ENCODE measurements at regions of chr17 and their contacts with region 1.

Region 1: DNA sequence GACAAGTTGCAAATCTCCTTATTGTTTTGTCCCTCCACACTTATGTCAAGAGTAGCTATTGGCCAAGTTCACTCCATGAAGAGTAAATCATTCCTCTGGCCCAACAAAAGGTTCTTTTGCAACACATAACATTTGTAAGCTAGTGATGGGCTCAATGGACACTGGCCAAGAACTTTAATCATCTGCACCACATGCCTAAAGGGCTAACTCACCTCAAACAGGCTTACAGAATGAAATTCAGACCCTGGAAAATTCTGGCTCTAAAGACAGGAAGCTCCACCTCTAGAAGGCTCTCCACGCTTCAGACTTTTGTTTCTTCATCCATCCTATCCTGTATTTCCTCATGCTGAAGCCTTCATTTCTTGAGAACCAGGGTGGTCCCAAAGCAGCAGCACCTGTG is 10.9 kb upstream of the ANKFN1 start:
- DNase-seq: no peak
- ATAC-seq: no peak
- H3K4me3 ChIP-seq: no peak overlapping the region
- H3K4me3 Mint-ChIP-seq: no peak overlapping the region
- H3K27ac ChIP-seq: no peak overlapping the region
- H3K27ac Mint-ChIP-seq: no peak overlapping the region
- H3K4me1 ChIP-seq: no peaks in the 10 kb centered on the region
- H3K4me1 Mint-ChIP-seq: no peaks in the 10 kb centered on the region
- H3K27me3 ChIP-seq: no peaks in the 10 kb centered on the region
- H3K27me3 Mint-ChIP-seq: no peaks in the 10 kb centered on the region
- CTCF ChIP-seq: no peak

Region 2: DNA sequence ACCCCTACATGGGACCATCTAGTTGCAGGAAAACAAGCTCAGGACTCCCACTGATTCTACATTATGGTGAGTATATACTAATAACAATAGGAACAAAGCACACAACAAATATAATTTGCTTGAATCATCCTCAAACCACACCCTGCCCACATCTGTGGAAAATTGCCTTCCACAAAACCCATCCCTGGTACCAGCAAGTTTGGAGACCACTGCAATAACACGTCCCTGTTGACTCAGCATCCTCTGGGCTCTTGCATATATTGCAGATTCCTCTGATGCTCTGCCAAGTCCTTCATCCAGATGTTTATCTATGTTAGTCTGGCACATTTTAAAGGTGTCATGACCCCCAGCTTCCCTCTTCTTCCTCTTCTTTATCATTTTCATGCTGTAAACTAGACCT is 253.1 kb before region 1 on chr17:
- CTCF ChIA-PET with region 1: no interaction called
- POLR2A ChIA-PET with region 1: no interaction called
- intact Hi-C with region 1: no loop called
- DNase-seq: no peak
- ATAC-seq: no peak
- H3K4me3 ChIP-seq: no peak overlapping the region
- H3K4me3 Mint-ChIP-seq: no peak overlapping the region
- H3K27ac ChIP-seq: no peak overlapping the region
- H3K27ac Mint-ChIP-seq: no peak overlapping the region
- H3K4me1 ChIP-seq: no peaks in the 10 kb centered on the region
- H3K4me1 Mint-ChIP-seq: no peaks in the 10 kb centered on the region
- H3K27me3 ChIP-seq: no peaks in the 10 kb centered on the region
- H3K27me3 Mint-ChIP-seq: peaks cover 7% of the 10 kb centered on the region
- CTCF ChIP-seq: no peak

Region 3: GRCh38 chr17:56203430-56203829 is 61.1 kb after region 1 on chr17:
- CTCF ChIA-PET with region 1: no interaction called
- POLR2A ChIA-PET with region 1: no interaction called
- intact Hi-C with region 1: loop called in 1 of 2 experiments (anchors 10 kb)
- DNase-seq: peak in 1 of 14 experiments; percentile 1
- ATAC-seq: no peak
- H3K4me3 ChIP-seq: no peak overlapping the region
- H3K4me3 Mint-ChIP-seq: no peak overlapping the region
- H3K27ac ChIP-seq: no peak overlapping the region
- H3K27ac Mint-ChIP-seq: no peak overlapping the region
- H3K4me1 ChIP-seq: no peaks in the 10 kb centered on the region
- H3K4me1 Mint-ChIP-seq: no peaks in the 10 kb centered on the region
- H3K27me3 ChIP-seq: no peaks in the 10 kb centered on the region
- H3K27me3 Mint-ChIP-seq: no peaks in the 10 kb centered on the region
- CTCF ChIP-seq: no peak

Region 4: GRCh38 chr17:56257082-56257481 is 114.8 kb after region 1 on chr17:
- CTCF ChIA-PET with region 1: no interaction called
- POLR2A ChIA-PET with region 1: no interaction called
- intact Hi-C with region 1: loop called in 1 of 2 experiments (anchors 5 kb)
- DNase-seq: no peak
- ATAC-seq: no peak
- H3K4me3 ChIP-seq: no peak overlapping the region
- H3K4me3 Mint-ChIP-seq: no peak overlapping the region
- H3K27ac ChIP-seq: no peak overlapping the region
- H3K27ac Mint-ChIP-seq: no peak overlapping the region
- H3K4me1 ChIP-seq: no peaks in the 10 kb centered on the region
- H3K4me1 Mint-ChIP-seq: no peaks in the 10 kb centered on the region
- H3K27me3 ChIP-seq: no peaks in the 10 kb centered on the region
- H3K27me3 Mint-ChIP-seq: no peaks in the 10 kb centered on the region
- CTCF ChIP-seq: no peak